Activated naive CD4-positive, alpha-beta T cell treated with anti-CD3 and anti-CD28 coated beads for 36 hours (primary cell): ENCODE measurements at regions of chr10 and their contacts with region 1.

Region 1: DNA sequence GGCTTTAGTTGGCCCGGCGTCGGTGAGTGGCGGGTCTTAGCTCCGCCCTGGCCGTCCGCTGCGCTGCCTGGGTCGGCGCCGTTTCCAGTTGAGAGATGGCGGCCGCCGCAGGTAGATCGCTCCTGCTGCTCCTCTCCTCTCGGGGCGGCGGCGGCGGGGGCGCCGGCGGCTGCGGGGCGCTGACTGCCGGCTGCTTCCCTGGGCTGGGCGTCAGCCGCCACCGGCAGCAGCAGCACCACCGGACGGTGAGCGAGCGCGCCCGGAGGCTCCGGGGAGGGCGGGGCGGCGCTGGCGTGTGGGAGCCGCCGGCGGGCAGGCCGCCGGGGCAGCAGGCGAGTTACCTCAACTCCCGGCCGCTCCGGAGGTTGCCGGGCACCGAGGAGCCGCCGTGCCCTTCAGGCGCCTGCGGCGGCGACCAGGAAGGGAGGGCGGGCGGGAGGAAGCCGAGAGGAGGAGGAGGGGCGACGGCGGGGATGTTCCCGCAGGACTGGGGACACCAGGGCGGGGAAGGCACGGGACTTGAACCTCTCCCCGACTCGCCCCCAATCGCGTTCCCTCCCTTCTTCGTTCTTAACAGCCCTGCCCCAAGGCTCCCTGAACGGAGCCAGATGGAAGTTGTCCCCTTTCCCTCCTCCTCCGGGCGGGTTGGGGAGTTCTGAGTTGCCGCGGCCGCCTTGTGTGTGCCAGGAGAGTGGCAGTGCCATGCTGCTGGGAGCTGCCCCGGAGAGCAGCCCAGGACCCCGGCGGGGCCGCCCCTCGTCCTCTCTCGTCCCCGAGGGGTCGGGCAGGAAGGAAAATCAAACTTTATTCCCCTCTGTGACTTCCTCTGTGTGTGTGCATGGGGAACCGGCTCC is at the start of gene MCU:
- DNase-seq: peak; percentile 95
- H3K4me3 Mint-ChIP-seq: peak within 1 kb of the TSS; percentile 83
- H3K27ac Mint-ChIP-seq: no peak within 1 kb of the TSS
- H3K4me1 Mint-ChIP-seq: peaks cover 32% of the 10 kb centered on the region
- H3K27me3 Mint-ChIP-seq: no peaks in the 10 kb centered on the region
- total RNA-seq, gene MCU: 23.6 to 25.6 TPM

Region 2: DNA sequence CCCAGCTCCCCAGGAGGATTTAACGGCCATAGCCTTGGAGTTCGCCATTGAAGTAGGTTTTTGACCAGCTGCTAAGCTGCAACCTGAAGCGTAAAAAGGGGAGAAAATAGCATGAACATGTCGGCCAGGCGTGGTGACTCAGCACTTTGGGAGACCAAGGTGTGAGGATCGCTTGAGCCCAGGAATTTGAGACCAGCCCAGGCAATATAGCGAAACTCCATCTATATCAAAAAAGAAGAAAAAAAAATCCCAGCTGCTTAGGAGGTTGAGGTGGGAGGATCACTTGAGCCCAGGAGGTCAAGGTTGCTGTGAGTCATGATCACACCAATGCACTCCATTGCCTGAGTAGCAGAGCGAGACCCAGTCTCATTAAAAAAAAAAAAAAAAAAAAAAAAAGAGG is 32.6 kb before region 1 on chr10:
- CTCF ChIA-PET with region 1: no interaction called
- intact Hi-C with region 1: no loop called
- DNase-seq: no peak
- H3K4me3 Mint-ChIP-seq: no peak overlapping the region
- H3K27ac Mint-ChIP-seq: no peak overlapping the region
- H3K4me1 Mint-ChIP-seq: no peaks in the 10 kb centered on the region
- H3K27me3 Mint-ChIP-seq: no peaks in the 10 kb centered on the region

Region 3: DNA sequence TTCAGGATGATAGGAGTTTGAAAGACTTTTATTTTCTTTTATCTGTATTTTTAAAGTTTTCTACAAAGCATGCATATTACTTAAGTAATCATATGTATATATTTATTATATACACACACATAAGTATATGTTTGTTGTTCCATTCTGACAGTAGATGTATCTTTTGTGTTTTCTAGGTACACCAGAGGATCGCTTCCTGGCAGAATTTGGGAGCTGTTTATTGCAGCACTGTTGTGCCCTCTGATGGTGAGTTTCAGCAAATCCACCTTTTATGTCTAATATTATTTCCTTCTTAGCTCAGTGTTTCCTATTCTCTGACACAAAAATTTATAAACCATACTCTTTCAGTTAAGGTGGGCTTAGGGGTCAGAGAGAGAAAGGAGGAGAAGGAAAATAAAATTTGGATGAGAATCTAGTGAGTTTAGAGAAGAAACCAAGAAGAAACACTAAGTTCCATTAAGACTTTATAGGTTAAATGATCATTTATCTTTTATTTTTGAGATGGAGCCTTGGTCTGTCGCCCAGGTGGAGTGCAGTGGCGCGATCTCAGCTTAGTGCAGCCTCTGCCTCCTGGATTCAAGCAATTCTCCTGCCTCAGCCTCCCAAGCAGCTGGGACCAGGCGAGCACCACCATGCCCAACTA is 142.0 kb after region 1 on chr10:
- CTCF ChIA-PET with region 1: interaction called, 6 read pairs
- intact Hi-C with region 1: loop called (anchors 1 kb)
- DNase-seq: peak; percentile 61
- H3K4me3 Mint-ChIP-seq: no peak overlapping the region
- H3K27ac Mint-ChIP-seq: no peak overlapping the region
- H3K4me1 Mint-ChIP-seq: no peaks in the 10 kb centered on the region
- H3K27me3 Mint-ChIP-seq: no peaks in the 10 kb centered on the region